AG04450 (cell line): ENCODE measurements at regions of chr5 and their contacts with region 1.

Region 1: GRCh38 chr5:154072414-154073171 is 33.8 kb downstream of the MFAP3 start:
- DNase-seq: peak; percentile 33
- H3K4me3 ChIP-seq: no peak overlapping the region
- H3K27ac ChIP-seq: no peak overlapping the region
- H3K27me3 ChIP-seq: no peaks in the 10 kb centered on the region
- CTCF ChIP-seq: peak; percentile 97

Region 2: GRCh38 chr5:154049636-154050035 is 23.0 kb before region 1 on chr5:
- CTCF ChIA-PET with region 1: interaction called, 12 read pairs
- POLR2A ChIA-PET with region 1: no interaction called
- DNase-seq: no peak
- H3K4me3 ChIP-seq: no peak overlapping the region
- H3K27ac ChIP-seq: no peak overlapping the region
- H3K27me3 ChIP-seq: no peaks in the 10 kb centered on the region
- CTCF ChIP-seq: no peak

Region 3: DNA sequence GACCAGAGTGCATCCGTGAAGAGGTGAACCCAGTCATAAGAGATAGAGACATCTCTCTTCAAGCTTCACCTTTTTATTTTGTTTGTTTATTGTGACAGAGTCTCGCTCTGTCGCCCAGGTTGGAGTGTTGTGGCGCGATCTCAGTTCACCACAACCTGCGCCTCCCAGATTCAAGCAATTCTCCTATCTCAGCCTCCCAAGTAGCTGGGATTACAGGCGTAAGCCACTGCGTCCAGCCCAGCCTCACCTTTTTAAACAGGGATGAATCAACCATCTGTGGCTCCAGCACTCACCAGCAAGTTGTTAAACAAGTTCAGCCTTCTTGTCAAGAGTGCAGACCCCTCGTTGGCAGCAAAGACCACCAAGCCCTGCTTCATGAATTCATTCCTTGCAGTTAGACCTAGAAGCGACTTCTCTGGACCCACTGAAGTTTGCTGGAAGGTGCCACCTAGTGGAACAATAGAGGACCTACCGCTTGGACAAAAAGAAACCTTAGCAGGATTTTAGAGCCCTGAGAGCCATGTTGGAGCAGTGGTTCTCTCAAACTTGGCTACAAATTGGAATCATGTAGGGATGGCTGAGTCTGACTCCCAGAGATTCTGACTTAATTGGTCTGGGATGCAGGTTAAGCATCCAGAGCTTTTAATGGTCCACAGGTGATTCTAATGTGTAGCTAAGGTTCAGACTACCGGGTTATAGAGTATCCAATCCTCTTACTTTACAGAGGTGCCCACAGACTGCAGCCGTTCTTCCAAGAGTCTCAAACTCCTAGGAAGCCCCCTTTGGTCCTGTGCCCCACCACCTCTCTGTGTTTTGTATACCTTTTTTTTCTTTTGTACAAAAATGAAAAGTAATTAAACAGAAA is 107.5 kb after region 1 on chr5:
- CTCF ChIA-PET with region 1: interaction called, 46 read pairs
- POLR2A ChIA-PET with region 1: no interaction called
- DNase-seq: peak; percentile 33
- H3K4me3 ChIP-seq: no peak overlapping the region
- H3K27ac ChIP-seq: no peak overlapping the region
- H3K27me3 ChIP-seq: peaks cover 9% of the 10 kb centered on the region
- CTCF ChIP-seq: peak; percentile 93

Region 4: DNA sequence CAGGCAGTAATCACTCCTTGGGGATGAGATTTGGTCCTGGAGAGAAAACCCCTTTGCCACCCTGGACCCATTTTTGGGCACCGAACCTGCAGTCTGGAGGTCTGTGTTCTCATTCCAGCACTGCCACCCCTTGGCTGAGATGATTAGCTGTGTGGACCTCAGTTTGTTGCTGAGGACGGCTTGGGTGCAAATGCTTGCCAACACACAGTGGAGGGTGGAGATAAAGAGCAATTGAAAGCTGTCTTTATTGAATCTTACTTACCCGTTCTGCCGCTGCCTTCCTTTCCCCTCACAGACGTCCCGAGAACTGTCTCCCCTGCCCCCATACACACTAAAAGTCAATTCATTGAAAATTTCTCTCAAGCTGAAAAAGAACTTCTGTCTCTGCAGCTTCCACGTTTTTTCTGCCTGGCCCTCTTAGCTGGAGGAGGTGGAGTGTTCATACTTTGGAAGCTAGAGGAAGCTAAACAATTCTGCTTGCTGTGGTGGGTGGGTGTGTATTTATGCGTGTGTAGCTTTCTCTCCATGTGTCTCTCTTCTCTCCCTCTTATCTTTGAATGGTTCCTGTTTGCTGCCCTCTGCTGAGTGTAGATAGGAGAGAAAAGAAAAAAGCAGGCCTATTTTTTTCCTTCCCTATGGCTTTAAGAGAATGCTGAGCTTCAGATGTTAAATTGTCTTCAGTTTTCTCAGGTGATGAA is 124.5 kb after region 1 on chr5:
- CTCF ChIA-PET with region 1: interaction called, 14 read pairs
- POLR2A ChIA-PET with region 1: no interaction called
- DNase-seq: peak; percentile 51
- H3K4me3 ChIP-seq: no peak overlapping the region
- H3K27ac ChIP-seq: peak overlapping the region; percentile 21
- H3K27me3 ChIP-seq: no peaks in the 10 kb centered on the region
- CTCF ChIP-seq: peak; percentile 61

Region 5: GRCh38 chr5:154356020-154356655 is 283.5 kb after region 1 on chr5:
- CTCF ChIA-PET with region 1: no interaction called
- POLR2A ChIA-PET with region 1: no interaction called
- DNase-seq: no peak
- H3K4me3 ChIP-seq: no peak overlapping the region
- H3K27ac ChIP-seq: no peak overlapping the region
- H3K27me3 ChIP-seq: no peaks in the 10 kb centered on the region
- CTCF ChIP-seq: no peak

Region 6: GRCh38 chr5:154449786-154450185 is 377.2 kb after region 1 on chr5:
- CTCF ChIA-PET with region 1: interaction called, 16 read pairs
- POLR2A ChIA-PET with region 1: no interaction called
- DNase-seq: no peak
- H3K4me3 ChIP-seq: no peak overlapping the region
- H3K27ac ChIP-seq: no peak overlapping the region
- H3K27me3 ChIP-seq: no peaks in the 10 kb centered on the region
- CTCF ChIP-seq: no peak